Activated naive CD4-positive, alpha-beta T cell treated with anti-CD3 and anti-CD28 coated beads, Interleukin-2, amount 10 ng/mL, durations not matched to agents 7 days and 5 days (primary cell): ENCODE measurements at regions of chr20 and their contacts with region 1.

Region 1: DNA sequence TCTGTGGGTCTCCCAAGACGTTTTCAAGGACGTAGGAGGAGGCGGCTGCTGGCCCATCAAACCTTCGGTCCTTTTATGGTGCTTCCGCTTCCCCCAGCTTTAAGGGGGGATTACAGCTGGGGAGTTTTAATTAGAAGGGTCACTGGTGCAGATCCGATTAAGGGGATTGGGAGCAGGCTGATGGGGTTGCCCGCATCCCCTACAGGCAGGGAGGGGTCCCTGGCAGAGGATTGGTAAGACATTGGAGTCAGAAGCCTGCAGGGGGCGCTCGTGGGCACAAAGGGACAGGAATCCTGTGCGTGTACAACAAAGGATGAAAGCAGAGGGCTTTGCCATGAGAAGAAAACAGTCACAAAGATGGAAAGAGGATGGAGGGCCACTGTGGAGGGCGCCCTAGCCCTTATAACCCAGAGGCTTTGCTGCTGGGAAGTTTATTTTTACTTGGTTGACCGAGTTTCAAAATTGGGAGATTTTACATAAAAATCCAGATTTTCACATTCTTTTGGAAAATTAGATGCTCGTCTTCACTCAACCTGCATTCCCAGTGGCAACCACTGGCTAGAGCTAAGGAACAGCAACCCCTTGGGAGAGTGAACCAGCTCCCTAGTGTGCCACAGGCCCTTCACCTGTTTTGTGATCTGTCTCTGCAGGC is 97.9 kb downstream of the KCNB1 start:
- DNase-seq: peak; percentile 80
- H3K4me3 Mint-ChIP-seq: no peak overlapping the region
- H3K27ac Mint-ChIP-seq: no peak overlapping the region
- H3K4me1 Mint-ChIP-seq: no peaks in the 10 kb centered on the region
- H3K27me3 Mint-ChIP-seq: peaks cover 33% of the 10 kb centered on the region

Region 2: DNA sequence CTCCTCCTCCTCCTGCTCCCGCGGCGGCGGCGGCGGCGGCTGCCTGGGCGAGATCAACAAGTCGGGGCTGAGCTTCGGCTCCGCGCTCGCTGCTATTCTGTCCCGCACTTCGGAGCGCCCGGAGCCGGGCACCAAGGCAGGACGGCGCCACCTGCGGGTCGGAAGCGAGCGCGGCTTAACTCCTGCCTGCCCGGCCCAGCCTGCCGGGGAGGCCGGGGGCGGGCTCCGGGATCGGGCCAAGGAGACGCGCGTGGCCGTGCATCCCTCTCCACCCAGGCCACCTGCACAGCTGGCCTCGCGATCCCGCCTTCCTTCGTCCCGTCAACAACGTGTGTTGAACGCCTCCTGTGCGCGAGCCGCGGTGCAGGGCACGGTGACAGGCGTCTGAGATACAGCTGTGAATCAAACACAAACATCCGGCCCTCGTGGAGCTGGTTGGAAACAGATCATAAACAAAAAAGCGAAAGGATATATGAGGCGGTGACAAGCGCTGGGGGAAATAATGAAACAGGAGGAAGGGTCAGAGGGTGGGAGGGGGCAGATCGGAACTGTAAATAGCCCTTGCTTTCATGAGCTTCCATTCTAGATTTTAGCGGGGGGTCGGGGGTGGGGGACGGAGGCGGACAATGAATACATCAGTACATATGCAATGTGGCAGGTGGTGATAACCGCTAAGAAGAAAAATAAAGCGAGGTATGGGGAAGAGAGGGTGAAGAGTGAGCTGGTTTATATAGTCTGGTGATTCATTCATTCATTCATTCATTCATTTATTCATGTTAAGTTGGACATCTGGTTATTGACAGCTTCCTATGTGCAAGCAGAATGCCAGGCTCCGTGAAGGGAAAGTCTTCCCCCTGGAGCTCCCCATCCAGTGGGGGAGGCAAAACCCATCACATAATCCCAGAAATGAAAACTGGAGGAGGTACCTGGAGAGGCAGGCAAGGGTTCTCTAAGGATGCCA is 99.9 kb after region 1 on chr20:
- CTCF ChIA-PET with region 1: interaction called, 16 read pairs
- DNase-seq: peak; percentile 77
- H3K4me3 Mint-ChIP-seq: peak overlapping the region; percentile 70
- H3K27ac Mint-ChIP-seq: no peak overlapping the region
- H3K4me1 Mint-ChIP-seq: peaks cover 11% of the 10 kb centered on the region
- H3K27me3 Mint-ChIP-seq: peaks cover 87% of the 10 kb centered on the region

Region 3: GRCh38 chr20:49508435-49509199 is 124.1 kb after region 1 on chr20:
- CTCF ChIA-PET with region 1: interaction called, 13 read pairs
- DNase-seq: no peak
- H3K4me3 Mint-ChIP-seq: no peak overlapping the region
- H3K27ac Mint-ChIP-seq: no peak overlapping the region
- H3K4me1 Mint-ChIP-seq: no peaks in the 10 kb centered on the region
- H3K27me3 Mint-ChIP-seq: peaks cover 67% of the 10 kb centered on the region

Region 4: DNA sequence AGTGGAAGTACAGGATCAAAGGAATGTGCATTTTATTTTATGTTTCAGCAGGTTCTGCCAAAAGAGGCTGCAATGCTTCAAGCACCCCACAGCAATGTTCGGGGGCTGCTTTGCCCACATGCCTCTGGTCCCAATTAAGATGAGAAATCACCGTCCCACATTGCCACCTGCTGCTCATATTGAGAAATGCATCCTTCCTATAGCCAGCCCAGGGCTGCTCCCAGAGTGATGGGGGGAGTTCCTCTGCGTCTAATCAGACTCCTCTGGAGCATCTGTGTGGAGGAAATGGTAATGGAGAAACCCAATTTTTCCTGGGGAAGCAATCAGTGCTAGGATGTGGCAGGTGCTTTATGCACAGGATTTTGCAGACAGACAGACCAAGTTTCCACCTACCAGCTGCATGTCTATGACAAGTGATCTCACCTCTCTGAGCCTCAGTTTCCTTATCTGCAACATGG is 149.7 kb after region 1 on chr20:
- CTCF ChIA-PET with region 1: interaction called, 14 read pairs
- DNase-seq: peak; percentile 76
- H3K4me3 Mint-ChIP-seq: no peak overlapping the region
- H3K27ac Mint-ChIP-seq: peak overlapping the region; percentile 31
- H3K4me1 Mint-ChIP-seq: peaks cover 20% of the 10 kb centered on the region
- H3K27me3 Mint-ChIP-seq: peaks cover 67% of the 10 kb centered on the region